Activated CD4-positive, alpha-beta T cell treated with anti-CD3 and anti-CD28 coated beads, Interleukin-2, amount 10 ng/mL, durations not matched to agents 24 days and 14 days (primary cell): ENCODE measurements at regions of chr17 and their contacts with region 1.

Region 1: GRCh38 chr17:47615766-47616424 is 33.8 kb upstream of the KPNB1 start:
- DNase-seq: peak; percentile 67
- H3K4me3 Mint-ChIP-seq: no peak overlapping the region
- H3K27ac Mint-ChIP-seq: peak overlapping the region; percentile 34
- H3K4me1 Mint-ChIP-seq: peaks cover 16% of the 10 kb centered on the region
- H3K27me3 Mint-ChIP-seq: no peaks in the 10 kb centered on the region

Region 2: DNA sequence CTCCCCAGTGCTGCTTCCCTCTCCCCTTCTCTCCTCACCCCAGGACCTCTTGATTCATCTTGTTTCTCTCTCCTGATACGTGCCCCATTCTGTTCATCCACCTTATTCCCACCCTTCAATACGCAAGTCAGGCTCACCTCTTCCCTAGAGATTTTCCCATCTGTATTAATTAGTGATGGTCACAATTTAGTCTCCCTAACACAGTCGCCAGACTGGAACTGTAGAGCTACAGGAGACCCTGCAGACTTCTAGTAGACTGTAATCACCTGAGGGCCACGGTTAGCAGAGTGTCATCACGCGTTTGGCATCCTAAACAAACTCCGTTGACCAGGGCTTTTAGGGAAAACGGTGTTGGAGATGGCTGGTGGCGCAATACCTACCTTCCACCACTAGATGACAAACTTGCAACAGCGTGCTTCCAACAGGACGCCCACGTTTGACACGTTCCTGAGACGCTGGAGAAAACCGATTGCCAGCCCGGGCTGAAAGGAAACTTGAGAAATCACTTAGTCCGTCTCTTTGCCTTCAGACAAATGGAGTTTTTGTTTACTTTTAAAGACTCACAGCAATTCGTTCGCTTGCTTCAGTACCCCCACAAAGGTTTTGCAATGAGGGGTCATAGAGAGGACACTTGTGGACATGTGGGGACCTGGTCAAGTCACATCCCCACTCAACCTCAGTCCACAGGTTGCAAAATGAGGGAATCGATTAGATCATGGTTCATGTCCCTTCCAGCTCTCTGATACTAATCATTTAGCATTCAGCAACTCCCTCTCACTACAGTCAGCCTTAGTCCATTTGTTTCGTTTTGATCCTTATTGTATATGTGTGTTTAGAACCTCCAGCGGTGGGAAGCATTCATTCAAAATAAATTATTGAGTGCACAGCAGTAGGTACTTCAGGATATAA is 386.1 kb before region 1 on chr17:
- intact Hi-C with region 1: loop called (anchors 5 kb)
- DNase-seq: peak; percentile 91
- H3K4me3 Mint-ChIP-seq: peak overlapping the region; percentile 78
- H3K27ac Mint-ChIP-seq: peak overlapping the region; percentile 39
- H3K4me1 Mint-ChIP-seq: peaks cover 17% of the 10 kb centered on the region
- H3K27me3 Mint-ChIP-seq: peaks cover 11% of the 10 kb centered on the region

Region 3: DNA sequence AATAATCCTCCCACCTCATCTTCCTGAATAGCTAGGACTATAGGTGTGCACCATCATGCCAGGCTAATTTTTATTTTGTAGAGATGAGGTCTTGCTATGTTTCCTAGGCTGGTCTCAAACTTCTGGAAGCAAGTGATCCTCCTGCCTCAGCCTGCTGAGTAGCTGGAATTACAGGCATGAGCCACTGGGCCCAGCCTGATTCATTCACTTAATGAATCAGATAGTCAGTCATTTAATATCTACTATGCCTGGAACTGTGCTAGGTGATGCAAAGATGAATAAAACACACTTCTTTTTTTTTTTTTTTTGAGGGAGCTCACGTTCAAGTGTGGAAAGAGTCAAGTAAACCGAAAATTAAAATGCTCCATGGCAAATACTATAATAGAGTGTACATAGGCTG is 252.7 kb before region 1 on chr17:
- intact Hi-C with region 1: loop called (anchors 5 kb)
- DNase-seq: no peak
- H3K4me3 Mint-ChIP-seq: no peak overlapping the region
- H3K27ac Mint-ChIP-seq: no peak overlapping the region
- H3K4me1 Mint-ChIP-seq: no peaks in the 10 kb centered on the region
- H3K27me3 Mint-ChIP-seq: peaks cover 6% of the 10 kb centered on the region

Region 4: GRCh38 chr17:47693734-47694580 is 78.1 kb after region 1 on chr17 and contains the start of gene TBKBP1:
- intact Hi-C with region 1: no loop called
- DNase-seq: peak; percentile 80
- H3K4me3 Mint-ChIP-seq: peak within 1 kb of the TSS; percentile 93
- H3K27ac Mint-ChIP-seq: peak within 1 kb of the TSS; percentile 88
- H3K4me1 Mint-ChIP-seq: peaks cover 38% of the 10 kb centered on the region
- H3K27me3 Mint-ChIP-seq: peaks cover 3% of the 10 kb centered on the region
- total RNA-seq, gene TBKBP1: 9.3 and 10.9 TPM in 2 replicates

Region 5: GRCh38 chr17:47941236-47941994 is 325.5 kb after region 1 on chr17 and contains the start of gene PNPO:
- intact Hi-C with region 1: no loop called
- DNase-seq: peak; percentile 98
- H3K4me3 Mint-ChIP-seq: peak within 1 kb of the TSS; percentile 90
- H3K27ac Mint-ChIP-seq: peak within 1 kb of the TSS; percentile 94
- H3K4me1 Mint-ChIP-seq: peaks cover 42% of the 10 kb centered on the region
- H3K27me3 Mint-ChIP-seq: no peaks in the 10 kb centered on the region
- total RNA-seq, gene PNPO: 61.5 and 69.4 TPM in 2 replicates